ENCODE measurements at regions of chr7 and their contacts with region 1.

Region 1: GRCh38 chr7:95686109-95686508 is 86.2 kb upstream of the DYNC1I1 start:
- DNase-seq: peak; percentile 60 to 84
- H3K4me3 ChIP-seq: no peak overlapping the region
- H3K27ac ChIP-seq: no peak overlapping the region
- H3K4me1 ChIP-seq: peaks cover 0 to 26% (median 7%) of the 10 kb centered on the region in 4 donors
- H3K27me3 ChIP-seq: no peaks in the 10 kb centered on the region
- CTCF ChIP-seq: peak in 5 of 7 experiments; percentile 21 to 79 (median 49)
- EP300 ChIP-seq: no peak
- POLR2A ChIP-seq: no peak

Region 2: GRCh38 chr7:95511716-95512260 is 174.3 kb before region 1 on chr7:
- intact Hi-C with region 1: loop called (anchors 5 kb)
- DNase-seq: peak; percentile 78 to 90
- H3K4me3 ChIP-seq: no peak overlapping the region
- H3K27ac ChIP-seq: no peak overlapping the region
- H3K4me1 ChIP-seq: no peaks in the 10 kb centered on the region
- H3K27me3 ChIP-seq: no peaks in the 10 kb centered on the region
- CTCF ChIP-seq: peak in 5 of 7 experiments; percentile 65 to 93 (median 77)
- EP300 ChIP-seq: no peak
- POLR2A ChIP-seq: no peak

Region 3: DNA sequence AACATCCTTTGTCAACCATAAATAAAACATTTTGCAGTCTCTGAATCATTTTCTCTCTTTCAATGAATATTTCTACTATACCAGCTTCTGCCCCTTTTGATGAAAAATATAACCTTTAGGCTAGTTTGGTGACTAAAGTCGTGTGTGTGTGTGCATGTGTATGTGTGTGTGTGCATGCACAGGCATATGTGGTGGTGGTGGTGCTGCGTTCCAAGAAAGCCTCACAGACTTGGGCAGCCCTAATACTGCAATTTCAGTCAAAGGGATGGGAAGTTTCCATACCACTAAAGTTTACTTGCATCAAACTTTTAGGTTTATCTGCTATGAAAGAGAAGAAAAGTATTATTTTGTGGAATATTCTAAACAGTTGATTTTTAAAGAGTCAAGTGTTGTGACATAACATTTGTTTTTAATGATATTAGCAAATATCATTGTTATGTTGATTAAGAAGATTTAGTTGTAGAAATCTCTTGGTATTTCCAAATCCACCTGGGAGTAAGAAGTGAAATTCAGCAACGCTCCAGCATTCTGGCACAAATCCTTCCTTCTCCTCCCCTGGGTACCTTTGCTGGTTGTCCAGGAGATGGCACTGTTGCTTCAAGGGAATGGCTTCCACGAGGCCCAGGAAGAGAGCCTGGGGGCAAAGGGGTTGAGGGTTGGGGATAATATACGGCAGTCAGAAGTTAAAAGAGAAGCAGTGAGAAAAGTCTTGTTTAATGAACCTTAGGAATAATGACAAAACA is 158.9 kb before region 1 on chr7:
- intact Hi-C with region 1: loop called (anchors 5 kb)
- DNase-seq: peak in 1 of 2 donors; percentile 83
- H3K4me3 ChIP-seq: no peak overlapping the region
- H3K27ac ChIP-seq: no peak overlapping the region
- H3K4me1 ChIP-seq: peaks cover 0 to 7% (median 5%) of the 10 kb centered on the region in 4 donors
- H3K27me3 ChIP-seq: peaks cover 0 to 4% (median 0%) of the 10 kb centered on the region in 3 donors
- CTCF ChIP-seq: peak in 5 of 7 experiments; percentile 78 to 96 (median 84)
- EP300 ChIP-seq: no peak
- POLR2A ChIP-seq: no peak